Common myeloid progenitor, CD34-positive (primary cell): ENCODE measurements at regions of chr18 and their contacts with region 1.

Region 1: GRCh38 chr18:54983041-54983686 is 23.9 kb upstream of the CCDC68 start:
- DNase-seq: peak; percentile 59 to 77 (median 76)
- H3K4me3 ChIP-seq: no peak overlapping the region
- H3K27ac ChIP-seq: no peak overlapping the region
- H3K4me1 ChIP-seq: no peaks in the 10 kb centered on the region
- H3K27me3 ChIP-seq: peaks cover 0 to 3% (median 0%) of the 10 kb centered on the region in 5 experiments

Region 2: DNA sequence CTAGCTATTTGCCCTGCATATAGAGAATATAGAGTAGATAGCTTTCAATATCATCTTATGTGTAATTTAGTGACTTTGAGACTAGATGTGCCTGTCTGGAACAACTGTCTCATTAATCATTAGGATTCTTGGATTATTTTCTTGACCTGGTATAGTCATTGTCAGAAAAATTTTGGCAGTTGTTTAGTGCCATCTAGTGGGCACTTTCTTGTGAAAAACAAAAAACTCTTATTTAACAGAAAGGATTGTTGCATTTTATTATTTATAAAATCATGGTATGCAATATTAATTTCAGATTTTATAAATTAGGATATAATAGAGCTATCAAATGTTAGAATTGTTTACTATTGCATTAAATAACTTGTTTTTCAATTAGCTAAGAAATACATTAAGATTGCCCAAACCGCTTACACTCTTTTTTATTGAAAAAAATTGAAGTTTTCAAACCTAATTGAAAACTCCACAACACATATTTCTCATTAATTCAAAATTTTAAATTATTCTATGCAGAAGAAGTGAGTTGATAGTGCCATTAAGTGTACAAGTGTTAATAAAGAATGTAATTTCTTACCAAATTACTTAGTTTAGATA is 311.8 kb before region 1 on chr18:
- CTCF ChIA-PET with region 1: interaction called, 33 read pairs
- POLR2A ChIA-PET with region 1: no interaction called
- DNase-seq: peak; percentile 42 to 66 (median 59)
- H3K4me3 ChIP-seq: no peak overlapping the region
- H3K27ac ChIP-seq: no peak overlapping the region
- H3K4me1 ChIP-seq: no peaks in the 10 kb centered on the region
- H3K27me3 ChIP-seq: no peaks in the 10 kb centered on the region

Region 3: GRCh38 chr18:54679318-54680149 is 303.6 kb before region 1 on chr18:
- CTCF ChIA-PET with region 1: interaction called, 33 read pairs
- POLR2A ChIA-PET with region 1: no interaction called
- DNase-seq: peak; percentile 71 to 85 (median 85)
- H3K4me3 ChIP-seq: no peak overlapping the region
- H3K27ac ChIP-seq: no peak overlapping the region
- H3K4me1 ChIP-seq: no peaks in the 10 kb centered on the region
- H3K27me3 ChIP-seq: peaks cover 0 to 7% (median 0%) of the 10 kb centered on the region in 5 experiments